ENCODE measurements at regions of chr15 and their contacts with region 1.

Region 1: DNA sequence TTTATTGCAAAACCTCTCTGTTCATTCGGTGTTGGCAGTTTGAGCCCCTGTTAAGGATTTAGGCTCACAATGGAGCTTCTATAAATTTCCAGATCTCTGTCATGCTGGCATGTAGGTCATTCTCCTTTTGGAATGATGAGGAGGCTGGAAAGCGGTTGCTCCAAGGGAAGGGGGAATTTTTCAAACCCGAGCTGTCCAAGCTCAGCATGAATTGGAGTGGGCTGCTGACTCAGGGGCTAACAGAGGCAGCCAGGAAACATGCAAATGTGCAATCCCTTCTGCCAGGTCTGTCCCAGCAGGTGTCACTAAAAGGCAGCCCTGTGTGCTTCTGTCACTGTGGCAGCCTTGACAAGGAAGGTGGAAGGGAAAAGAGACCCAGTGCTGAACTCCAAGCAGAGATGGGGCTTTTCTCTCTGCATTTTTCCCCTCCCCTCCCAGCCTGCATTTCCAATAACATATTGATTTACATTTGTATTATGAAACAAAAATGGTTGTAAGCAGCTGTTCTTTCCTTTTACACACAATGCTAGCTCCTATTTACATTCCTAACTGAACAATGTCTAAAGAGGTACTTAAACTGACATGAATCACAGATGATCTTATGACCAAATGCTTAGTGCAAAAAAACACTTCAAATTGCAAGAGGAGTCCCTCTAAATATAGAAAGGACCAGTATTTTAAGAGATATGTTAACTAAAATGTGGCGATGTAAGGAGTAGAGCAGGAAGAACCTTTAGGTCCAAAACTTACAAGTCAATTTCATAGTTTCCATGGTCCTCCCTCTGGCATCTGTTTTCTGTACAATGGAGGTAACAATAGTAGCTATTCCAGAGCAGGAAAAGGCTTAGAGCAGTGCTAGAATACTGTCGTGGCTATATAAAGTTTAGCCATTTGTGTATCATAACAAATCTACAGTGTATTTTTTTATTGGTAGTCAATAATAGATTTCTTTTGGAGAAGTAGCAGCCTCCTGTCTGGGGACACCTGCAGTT is 84.5 kb upstream of the ATP10A start:
- DNase-seq: peak; percentile 44
- H3K4me3 Mint-ChIP-seq: no peak overlapping the region
- H3K27ac Mint-ChIP-seq: no peak overlapping the region
- H3K4me1 Mint-ChIP-seq: peaks cover 2% of the 10 kb centered on the region
- H3K27me3 Mint-ChIP-seq: no peaks in the 10 kb centered on the region

Region 2: DNA sequence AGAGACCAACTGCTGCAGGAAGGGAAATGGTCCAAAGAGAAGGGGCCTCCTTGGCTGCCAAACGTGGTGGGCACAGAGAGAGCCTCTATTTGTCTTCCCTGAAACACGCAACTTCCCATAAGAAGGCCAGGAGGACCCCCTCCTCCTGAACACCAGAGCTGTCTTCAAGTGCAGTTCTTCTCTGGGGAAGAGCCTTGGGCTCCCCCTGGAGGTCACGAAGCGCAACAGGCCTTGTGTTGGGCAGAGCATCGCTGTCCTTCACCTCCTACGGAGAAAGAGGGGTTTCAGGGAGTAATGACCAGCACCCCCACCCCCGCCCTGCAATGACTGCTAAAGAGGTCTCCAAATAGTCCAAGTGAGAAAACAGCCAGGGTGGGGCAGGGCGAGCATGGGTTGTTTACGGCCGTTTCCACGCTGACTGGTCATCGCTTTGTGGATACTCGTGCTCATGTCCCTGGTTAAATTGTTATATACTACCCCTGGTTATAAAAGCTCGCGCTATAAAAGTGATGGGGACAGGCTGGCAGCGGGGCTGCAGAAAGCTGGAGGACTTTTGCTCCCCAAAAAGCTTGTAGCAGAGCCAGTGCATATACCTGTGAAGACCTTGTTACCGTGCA is 313.0 kb after region 1 on chr15:
- CTCF ChIA-PET with region 1: no interaction called
- intact Hi-C with region 1: loop called (anchors 1 kb)
- DNase-seq: peak; percentile 38
- H3K4me3 Mint-ChIP-seq: no peak overlapping the region
- H3K27ac Mint-ChIP-seq: no peak overlapping the region
- H3K4me1 Mint-ChIP-seq: no peaks in the 10 kb centered on the region
- H3K27me3 Mint-ChIP-seq: peaks cover 13% of the 10 kb centered on the region